ENCODE measurements at regions of chr22 and their contacts with region 1.

Region 1: DNA sequence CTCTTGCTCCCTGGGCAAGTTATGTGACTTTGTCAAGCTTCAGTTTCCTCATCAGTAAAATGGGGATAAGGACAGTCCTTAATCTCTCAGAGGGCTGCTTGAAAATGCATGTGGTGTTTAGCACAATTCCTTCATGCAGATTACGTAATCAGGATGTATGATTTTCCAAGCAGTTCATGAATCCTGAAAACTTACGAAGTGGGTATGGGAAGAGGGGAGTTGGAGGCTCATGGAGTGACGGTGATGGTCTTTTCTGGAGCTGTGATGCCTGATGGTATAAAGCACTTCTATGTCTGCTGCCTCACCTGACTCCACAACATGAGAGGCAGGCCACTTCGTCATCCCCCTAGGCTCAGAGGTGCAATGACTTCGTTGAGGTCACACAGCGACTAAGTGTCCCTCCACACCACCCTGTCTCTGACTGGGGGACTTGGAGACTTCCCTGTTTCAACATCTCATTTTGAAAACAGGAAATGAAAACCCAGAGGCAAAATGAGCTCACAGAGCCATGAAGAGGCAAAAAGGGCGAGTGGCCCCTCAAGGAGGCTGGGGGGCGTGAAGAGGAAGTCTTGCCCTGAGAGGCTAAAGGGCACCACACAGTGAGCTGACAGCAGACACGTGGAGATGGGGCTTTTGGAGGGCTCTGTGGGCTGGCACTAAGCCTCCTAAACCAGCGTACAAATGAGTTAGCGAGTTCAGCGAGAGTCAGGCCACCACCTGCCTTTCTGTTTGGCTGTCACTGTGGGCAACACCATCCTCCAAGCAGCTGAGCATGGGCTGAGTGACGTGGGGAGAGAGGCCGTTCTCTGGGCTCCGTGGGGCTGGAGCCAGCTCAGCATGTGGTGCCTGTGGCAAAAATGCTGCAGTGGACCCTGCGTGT is 10.1 kb downstream of the MCM5 start:
- DNase-seq: no peak
- H3K4me3 ChIP-seq: no peak overlapping the region
- H3K27ac ChIP-seq: no peak overlapping the region
- H3K4me1 ChIP-seq: no peaks in the 10 kb centered on the region
- H3K27me3 ChIP-seq: no peaks in the 10 kb centered on the region
- CTCF ChIP-seq: no peak
- EP300 ChIP-seq: no peak
- POLR2A ChIP-seq: no peak

Region 2: DNA sequence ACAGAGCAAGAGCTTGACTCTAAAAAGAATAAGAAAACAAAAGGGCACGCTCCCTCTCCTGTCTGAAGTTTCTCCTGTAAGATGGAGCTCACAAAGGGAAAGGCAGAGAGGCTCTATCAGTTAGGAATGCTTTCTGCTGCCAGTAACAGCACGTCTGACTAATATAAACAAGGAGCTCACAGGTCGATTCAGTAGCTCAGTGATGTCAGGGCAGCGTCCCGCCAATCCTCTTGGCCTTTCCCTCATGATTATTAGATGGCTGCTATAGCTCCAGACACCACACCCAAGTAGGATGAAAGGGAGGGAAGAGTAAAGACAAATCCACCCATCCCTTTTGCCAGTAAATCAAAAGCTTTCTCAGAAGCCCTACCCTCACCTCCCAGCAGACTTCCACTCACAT is 204.1 kb before region 1 on chr22:
- intact Hi-C with region 1: no loop called
- DNase-seq: no peak
- H3K4me3 ChIP-seq: no peak overlapping the region
- H3K27ac ChIP-seq: no peak overlapping the region
- H3K4me1 ChIP-seq: no peaks in the 10 kb centered on the region
- H3K27me3 ChIP-seq: no peaks in the 10 kb centered on the region
- CTCF ChIP-seq: no peak
- EP300 ChIP-seq: no peak
- POLR2A ChIP-seq: no peak

Region 3: DNA sequence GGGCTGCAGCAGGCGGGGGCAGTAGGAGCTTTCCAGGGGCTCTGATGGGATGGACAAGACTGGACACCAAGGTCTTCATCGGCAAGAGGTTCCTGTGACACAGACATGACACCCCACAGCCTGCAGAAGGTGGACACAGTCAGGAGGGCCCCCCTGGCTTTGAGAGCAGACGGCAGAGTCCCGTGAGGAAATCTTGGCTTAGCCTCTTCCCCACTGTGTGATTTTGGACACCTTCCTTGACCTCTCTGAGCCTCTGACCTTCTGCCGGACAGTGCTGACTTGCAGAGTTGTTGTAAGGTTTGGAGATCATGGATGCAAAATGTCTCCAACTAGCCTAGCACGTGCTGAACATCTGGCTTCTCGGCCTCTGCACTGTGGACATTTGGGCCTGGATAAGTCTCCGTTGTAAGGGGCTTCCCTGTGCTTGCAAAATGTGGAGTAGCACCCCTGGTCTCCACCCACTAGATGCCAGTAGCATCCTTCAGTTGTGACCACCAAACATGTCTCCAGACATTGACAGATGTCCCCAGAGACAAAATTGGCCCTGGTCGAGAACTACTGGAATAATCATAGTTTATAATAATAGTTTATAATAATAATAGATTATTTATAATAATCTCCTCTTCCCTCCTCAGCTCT is 44.5 kb after region 1 on chr22:
- intact Hi-C with region 1: loop called in 1 of 4 experiments (anchors 5 kb)
- DNase-seq: no peak
- H3K4me3 ChIP-seq: no peak overlapping the region
- H3K27ac ChIP-seq: no peak overlapping the region
- H3K4me1 ChIP-seq: no peaks in the 10 kb centered on the region
- H3K27me3 ChIP-seq: no peaks in the 10 kb centered on the region
- CTCF ChIP-seq: no peak
- EP300 ChIP-seq: no peak
- POLR2A ChIP-seq: no peak

Measured in ovary (tissue), 10 donors.